GM12878 (cell line): ENCODE measurements at regions of chr4 and their contacts with region 1.

Region 1: GRCh38 chr4:85024671-85025070 is 58.2 kb upstream of the WDFY3 start:
- DNase-seq: no peak
- ATAC-seq: no peak
- H3K4me3 ChIP-seq: no peak overlapping the region
- H3K27ac ChIP-seq: no peak overlapping the region
- H3K4me1 ChIP-seq: no peaks in the 10 kb centered on the region
- H3K27me3 ChIP-seq: no peaks in the 10 kb centered on the region
- CTCF ChIP-seq: no peak
- EP300 ChIP-seq: no peak
- POLR2A ChIP-seq: no peak
- RAD21 ChIP-seq: no peak

Region 2: DNA sequence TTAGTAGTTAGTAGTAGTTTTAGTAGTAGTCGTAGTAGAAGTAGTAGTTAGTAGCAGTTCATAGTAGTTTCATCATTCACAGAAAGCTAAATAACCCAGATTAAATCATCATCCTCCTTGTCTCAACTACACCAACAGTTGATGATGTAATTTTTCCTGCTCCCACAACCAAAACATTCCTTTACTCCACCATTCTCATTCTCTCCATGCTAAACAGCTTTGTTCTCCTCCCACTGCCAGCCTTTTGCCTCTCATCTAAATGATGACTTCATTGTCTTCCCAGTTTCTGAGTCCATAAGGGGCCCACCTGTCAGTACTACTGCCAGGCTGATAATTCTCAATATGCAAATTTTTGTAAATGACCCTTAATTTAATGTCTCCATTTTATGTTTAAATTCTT is 519.2 kb after region 1 on chr4:
- CTCF ChIA-PET with region 1: no interaction called
- POLR2A ChIA-PET with region 1: interaction called, 11 read pairs
- RAD21 ChIA-PET with region 1: no interaction called
- SMC1A ChIA-PET with region 1: no interaction called
- in situ Hi-C with region 1: no loop called
- intact Hi-C with region 1: no loop called
- DNase-seq: no peak
- ATAC-seq: no peak
- H3K4me3 ChIP-seq: no peak overlapping the region
- H3K27ac ChIP-seq: no peak overlapping the region
- H3K4me1 ChIP-seq: no peaks in the 10 kb centered on the region
- H3K27me3 ChIP-seq: no peaks in the 10 kb centered on the region
- CTCF ChIP-seq: no peak
- EP300 ChIP-seq: no peak
- POLR2A ChIP-seq: no peak
- RAD21 ChIP-seq: no peak